Left cardiac atrium (tissue), 4 donors: ENCODE measurements at regions of chr20 and their contacts with region 1.

Region 1: GRCh38 chr20:45935416-45936046 is 1.0 kb downstream of the PCIF1 start:
- DNase-seq: no peak
- ATAC-seq: peak in 1 of 2 donors; percentile 3

Region 2: DNA sequence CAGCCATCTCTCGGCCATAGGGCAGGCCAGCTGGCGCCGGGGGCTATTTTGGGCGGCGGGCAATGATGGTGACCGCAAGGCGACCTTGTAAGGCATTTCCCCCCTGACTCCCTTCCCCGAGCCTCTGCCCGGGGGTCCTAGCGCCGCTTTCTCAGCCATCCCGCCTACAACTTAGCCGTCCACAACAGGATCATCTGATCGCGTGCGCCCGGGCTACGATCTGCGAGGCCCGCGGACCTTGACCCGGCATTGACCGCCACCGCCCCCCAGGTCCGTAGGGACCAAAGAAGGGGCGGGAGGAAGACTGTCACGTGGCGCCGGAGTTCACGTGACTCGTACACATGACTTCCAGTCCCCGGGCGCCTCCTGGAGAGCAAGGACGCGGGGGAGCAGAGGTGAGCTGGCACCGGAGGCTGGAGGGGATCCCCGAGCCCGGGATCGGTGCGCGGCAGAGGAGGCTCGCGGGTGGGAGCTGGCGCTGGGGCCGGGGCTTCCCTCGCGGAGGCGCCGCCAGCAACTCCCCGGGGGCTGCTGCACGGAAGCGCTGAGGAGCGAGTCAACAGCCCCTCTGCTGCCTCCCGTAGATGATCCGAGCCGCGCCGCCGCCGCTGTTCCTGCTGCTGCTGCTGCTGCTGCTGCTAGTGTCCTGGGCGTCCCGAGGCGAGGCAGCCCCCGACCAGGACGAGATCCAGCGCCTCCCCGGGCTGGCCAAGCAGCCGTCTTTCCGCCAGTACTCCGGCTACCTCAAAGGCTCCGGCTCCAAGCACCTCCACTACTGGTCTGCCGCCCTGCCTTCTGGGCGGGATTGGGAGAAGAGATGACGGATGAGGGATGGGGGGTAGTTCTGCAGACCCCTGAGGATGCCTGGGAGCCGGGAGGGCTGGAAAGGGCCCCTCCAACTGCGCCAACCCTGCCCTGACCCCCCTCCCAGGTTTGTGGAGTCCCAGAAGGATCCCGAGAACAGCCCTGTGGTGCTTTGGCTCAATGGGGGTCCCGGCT is 44.2 kb before region 1 on chr20 and contains the starts of genes CTSA and NEURL2:
- intact Hi-C with region 1: loop called in 1 of 2 experiments (anchors 2 kb)
- DNase-seq: peak; percentile 95
- ATAC-seq: peak; percentile 88 to 93
- total RNA-seq, gene CTSA: 107 to 108 TPM
- total RNA-seq, gene NEURL2: 6.0 to 11.1 TPM